PC-9 (cell line): ENCODE measurements at regions of chr1 and their contacts with region 1.

Region 1: DNA sequence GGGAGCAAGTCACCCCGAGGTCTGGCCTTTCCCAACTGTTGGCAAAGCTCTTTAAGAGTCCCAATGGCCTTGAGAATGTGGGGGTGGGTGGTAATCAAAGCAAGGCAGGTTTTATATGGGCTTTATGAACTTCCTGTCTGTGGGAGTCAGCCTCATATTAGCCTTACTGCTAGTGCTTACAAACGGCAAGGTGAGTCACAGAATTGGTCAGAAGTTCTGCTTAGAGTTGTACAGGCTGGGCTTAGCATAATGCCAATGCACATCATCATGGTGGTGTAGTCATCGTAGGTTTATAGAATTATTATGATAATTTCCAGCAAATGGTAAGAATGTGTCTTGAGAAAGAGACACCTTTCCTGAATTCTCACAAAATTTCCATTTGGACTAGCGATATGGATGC is 192.7 kb upstream of the KIAA0040 start:
- DNase-seq: no peak
- H3K4me3 ChIP-seq: no peak overlapping the region
- H3K27ac ChIP-seq: no peak overlapping the region
- H3K4me1 ChIP-seq: no peaks in the 10 kb centered on the region
- H3K27me3 ChIP-seq: peaks cover 26% of the 10 kb centered on the region
- CTCF ChIP-seq: no peak

Region 2: DNA sequence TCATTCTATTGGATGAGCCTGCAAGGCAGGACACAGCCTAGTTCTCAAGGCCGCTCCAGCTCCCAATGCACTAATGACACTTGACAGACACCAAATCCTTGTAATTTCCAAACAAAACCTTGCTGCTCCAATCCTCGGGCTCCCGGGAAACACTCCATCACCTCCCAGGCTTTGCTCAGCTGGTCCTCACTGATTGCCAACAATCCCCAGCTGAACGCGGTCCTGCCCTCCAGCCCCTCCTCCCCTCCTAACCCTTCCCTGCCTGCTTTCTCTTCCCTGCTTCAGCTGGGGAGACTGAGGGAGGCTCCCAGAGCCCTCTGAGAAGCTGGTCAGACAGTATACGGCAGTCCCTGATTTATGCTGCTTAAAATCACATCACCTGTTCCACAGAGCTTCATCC is 472.4 kb after region 1 on chr1:
- CTCF ChIA-PET with region 1: interaction called, 10 read pairs
- POLR2A ChIA-PET with region 1: no interaction called
- intact Hi-C with region 1: no loop called
- DNase-seq: no peak
- H3K4me3 ChIP-seq: no peak overlapping the region
- H3K27ac ChIP-seq: no peak overlapping the region
- H3K4me1 ChIP-seq: no peaks in the 10 kb centered on the region
- H3K27me3 ChIP-seq: peaks cover 82% of the 10 kb centered on the region
- CTCF ChIP-seq: no peak